ENCODE measurements at regions of chr6 and their contacts with region 1.

Region 1: DNA sequence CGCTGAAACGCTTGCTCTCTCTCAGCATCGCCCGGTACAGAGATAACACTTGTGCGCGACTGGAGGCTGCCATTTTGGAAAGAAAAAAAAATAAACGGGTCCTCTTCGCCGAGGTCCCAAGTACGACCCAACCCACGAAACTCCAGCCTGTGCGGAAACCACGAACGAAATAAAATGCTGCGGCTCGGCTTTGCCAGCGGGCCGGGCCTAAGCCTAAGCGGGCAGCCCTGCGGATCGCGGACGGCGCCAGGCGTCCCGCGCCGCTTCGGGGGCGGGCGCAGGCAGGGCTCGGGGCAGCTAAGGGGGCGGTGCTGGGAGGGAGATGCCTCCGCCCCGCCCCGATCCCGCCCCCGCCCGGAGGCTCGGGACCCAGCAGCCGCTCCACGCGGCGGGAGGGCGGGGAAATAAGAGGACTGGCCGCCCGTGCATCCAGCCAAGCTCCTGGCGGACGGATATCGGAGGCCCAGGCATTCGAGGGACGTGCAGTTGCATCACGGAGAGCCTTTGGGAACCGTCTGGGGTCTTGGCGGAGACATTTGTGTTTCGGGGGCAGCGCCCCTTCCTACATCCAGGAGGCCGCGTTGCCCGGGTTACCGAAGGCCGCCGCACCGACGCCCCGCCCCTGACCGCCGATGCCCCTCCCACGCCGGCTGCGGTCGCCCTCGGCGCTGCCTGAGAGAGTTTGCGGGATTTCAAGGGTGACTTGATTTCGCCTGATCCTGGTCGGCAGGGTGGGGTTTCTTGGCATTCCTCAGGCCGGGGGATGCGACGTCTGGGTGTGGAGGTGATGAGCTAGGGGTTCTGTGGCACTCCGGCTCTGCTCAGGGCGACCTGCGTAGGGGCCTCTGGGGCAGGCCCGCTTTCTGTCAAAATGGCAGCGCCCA is at the starts of genes FARS2 and LYRM4:
- DNase-seq: peak; percentile 94 to 96
- ATAC-seq: peak; percentile 99
- H3K4me3 ChIP-seq: peak within 1 kb of the TSS; percentile 75 to 90
- H3K27ac ChIP-seq: peak within 1 kb of the TSS; percentile 71 to 72
- H3K4me1 ChIP-seq: peaks cover 0 to 7% of the 10 kb centered on the region in 2 donors
- H3K27me3 ChIP-seq: no peaks in the 10 kb centered on the region
- total RNA-seq, gene FARS2: 11.1 to 14.2 TPM
- total RNA-seq, gene LYRM4: 17.9 to 23.9 TPM

Region 2: GRCh38 chr6:5214570-5215052 is 46.3 kb before region 1 on chr6:
- intact Hi-C with region 1: loop called in 1 of 2 experiments (anchors 2 kb)
- DNase-seq: peak; percentile 60 to 80
- ATAC-seq: peak; percentile 93
- H3K4me3 ChIP-seq: no peak overlapping the region
- H3K27ac ChIP-seq: no peak overlapping the region
- H3K4me1 ChIP-seq: no peaks in the 10 kb centered on the region
- H3K27me3 ChIP-seq: no peaks in the 10 kb centered on the region

Measured in aorta (tissue), 5 donors.